Activated CD4-positive, alpha-beta T cell treated with anti-CD3 and anti-CD28 coated beads for 36 hours (primary cell): ENCODE measurements at regions of chr6 and their contacts with region 1.

Region 1: GRCh38 chr6:41705996-41706835 is 29.2 kb downstream of the TFEB start:
- DNase-seq: peak; percentile 90
- ATAC-seq: peak; percentile 93
- H3K4me3 Mint-ChIP-seq: peak overlapping the region; percentile 34
- H3K27ac Mint-ChIP-seq: peak overlapping the region; percentile 85
- H3K4me1 Mint-ChIP-seq: peaks cover 33% of the 10 kb centered on the region
- H3K27me3 Mint-ChIP-seq: no peaks in the 10 kb centered on the region

Region 2: DNA sequence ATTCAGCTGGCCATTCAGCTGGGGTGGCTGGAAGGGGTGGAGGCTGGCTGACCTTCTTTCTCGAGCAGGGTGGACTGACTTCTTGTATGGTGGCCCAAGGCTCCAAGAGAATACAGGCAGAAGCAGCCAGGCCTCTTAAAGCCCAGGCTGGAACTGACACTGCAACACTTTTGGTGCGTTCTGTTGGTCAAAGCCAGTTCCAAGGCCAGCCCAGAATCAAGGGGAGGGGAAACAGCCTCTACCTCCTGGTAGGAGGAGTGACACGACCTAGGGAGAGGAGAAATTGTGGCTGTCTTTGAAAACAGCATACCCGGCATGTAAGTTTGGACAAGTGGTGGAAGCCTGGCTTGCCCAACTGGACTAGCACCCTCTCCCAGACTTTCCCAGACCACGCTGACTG is 88.1 kb before region 1 on chr6:
- CTCF ChIA-PET with region 1: no interaction called
- POLR2A ChIA-PET with region 1: no interaction called
- intact Hi-C with region 1: no loop called
- DNase-seq: no peak
- ATAC-seq: no peak
- H3K4me3 Mint-ChIP-seq: no peak overlapping the region
- H3K27ac Mint-ChIP-seq: no peak overlapping the region
- H3K4me1 Mint-ChIP-seq: no peaks in the 10 kb centered on the region
- H3K27me3 Mint-ChIP-seq: peaks cover 6% of the 10 kb centered on the region

Region 3: GRCh38 chr6:41630946-41631345 is 75.3 kb before region 1 on chr6:
- CTCF ChIA-PET with region 1: no interaction called
- POLR2A ChIA-PET with region 1: interaction called, 11 read pairs
- intact Hi-C with region 1: no loop called
- DNase-seq: no peak
- ATAC-seq: no peak
- H3K4me3 Mint-ChIP-seq: no peak overlapping the region
- H3K27ac Mint-ChIP-seq: no peak overlapping the region
- H3K4me1 Mint-ChIP-seq: no peaks in the 10 kb centered on the region
- H3K27me3 Mint-ChIP-seq: peaks cover 8% of the 10 kb centered on the region